Transverse colon (tissue), 4 donors: ENCODE measurements at regions of chr18 and their contacts with region 1.

Region 1: DNA sequence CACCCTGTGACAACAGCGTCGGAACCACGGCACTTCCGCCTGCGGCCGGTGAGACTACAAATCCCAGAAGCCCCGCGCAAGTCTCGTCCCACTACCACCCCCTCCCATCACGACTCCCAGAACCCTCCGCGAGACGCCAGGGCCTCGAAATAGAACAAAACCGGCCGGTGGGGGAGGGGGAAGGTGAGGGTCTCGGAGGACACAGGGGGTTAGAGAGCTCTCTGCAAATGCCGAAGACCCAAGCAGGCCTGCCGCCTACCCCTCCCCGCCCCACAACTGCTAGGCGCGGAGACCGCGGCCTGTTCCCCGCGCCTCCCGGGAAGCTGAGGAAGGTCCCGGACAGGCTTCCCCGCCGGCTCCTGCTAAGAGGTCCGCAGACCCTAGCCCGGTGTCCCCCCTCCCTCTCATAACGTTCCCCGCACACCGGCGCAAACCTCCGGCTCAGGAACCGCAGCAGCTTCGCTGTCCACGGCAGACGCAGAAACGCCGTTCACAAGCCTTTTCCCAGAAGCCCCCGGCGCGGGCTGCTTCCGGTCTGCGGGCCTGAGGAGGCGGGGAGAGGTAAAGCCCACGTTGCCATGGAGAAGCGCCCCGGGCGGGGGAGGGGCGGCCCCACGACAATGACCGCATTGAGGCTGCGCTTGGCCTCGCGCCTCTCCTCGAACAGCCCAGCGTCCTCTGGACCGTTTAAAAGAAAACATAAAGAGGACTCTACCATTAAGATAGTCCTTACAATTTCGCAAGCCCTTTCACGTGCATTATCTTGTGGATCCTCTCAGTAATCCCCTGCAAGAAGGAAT is at the start of gene ZNF24:
- DNase-seq: peak; percentile 97
- H3K4me3 ChIP-seq: peak within 1 kb of the TSS; percentile 76 to 94 (median 85)
- H3K27ac ChIP-seq: peak within 1 kb of the TSS; percentile 96 to 99 (median 98)
- H3K4me1 ChIP-seq: peaks cover 3 to 44% (median 21%) of the 10 kb centered on the region in 4 donors
- H3K27me3 ChIP-seq: no peaks in the 10 kb centered on the region
- CTCF ChIP-seq: no peak
- EP300 ChIP-seq: peak; percentile 27
- POLR2A ChIP-seq: peak; percentile 83
- total RNA-seq, gene ZNF24: 12.7 to 34.5 (median 29.1) TPM

Region 2: DNA sequence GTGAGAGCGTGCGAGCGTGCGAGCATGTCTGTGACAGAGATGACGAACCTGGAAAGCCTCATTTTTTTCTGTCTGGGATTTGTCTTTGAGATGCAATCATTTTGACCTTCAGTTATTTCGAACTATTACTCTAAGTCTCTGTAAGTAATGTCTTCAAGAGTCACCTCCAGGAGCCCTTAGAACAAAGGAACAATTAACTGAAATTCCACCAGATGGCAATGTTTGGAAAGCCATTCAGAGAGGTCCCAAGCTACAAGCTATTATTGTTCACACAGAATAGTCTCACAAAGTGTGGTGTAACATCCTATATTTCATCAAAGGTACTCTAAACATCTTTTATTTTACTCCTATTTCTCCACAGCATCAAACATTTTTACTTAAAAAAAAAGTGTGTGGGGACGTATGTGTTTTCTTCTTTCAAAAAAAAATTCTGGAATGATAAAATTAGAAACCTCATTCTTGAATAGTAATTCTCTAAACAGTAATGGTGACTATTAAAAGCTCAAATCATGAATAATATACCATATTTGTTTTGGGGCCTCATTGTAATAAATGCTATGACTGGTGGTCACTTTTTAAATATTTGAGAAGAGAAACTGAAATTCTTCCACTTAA is 338.1 kb before region 1 on chr18:
- in situ Hi-C with region 1: loop called in 1 of 4 experiments (anchors 25 kb)
- intact Hi-C with region 1: no loop called
- DNase-seq: no peak
- H3K4me3 ChIP-seq: no peak overlapping the region
- H3K27ac ChIP-seq: no peak overlapping the region
- H3K4me1 ChIP-seq: no peaks in the 10 kb centered on the region
- H3K27me3 ChIP-seq: no peaks in the 10 kb centered on the region
- CTCF ChIP-seq: peak; percentile 54 to 69 (median 60)
- EP300 ChIP-seq: no peak
- POLR2A ChIP-seq: no peak

Region 3: GRCh38 chr18:35240664-35241447 is 103.3 kb before region 1 on chr18 and contains the start of gene ZNF397:
- in situ Hi-C with region 1: loop called in 2 of 4 experiments (anchors 5 to 25 kb)
- intact Hi-C with region 1: no loop called
- DNase-seq: peak; percentile 99
- H3K4me3 ChIP-seq: peak within 1 kb of the TSS; percentile 60 to 80 (median 71)
- H3K27ac ChIP-seq: peak within 1 kb of the TSS; percentile 93 to 96 (median 95)
- H3K4me1 ChIP-seq: peaks cover 3 to 17% (median 11%) of the 10 kb centered on the region in 4 donors
- H3K27me3 ChIP-seq: no peaks in the 10 kb centered on the region
- CTCF ChIP-seq: no peak
- EP300 ChIP-seq: no peak
- POLR2A ChIP-seq: peak; percentile 94
- total RNA-seq, gene ZNF397: 21.8 to 60.6 (median 32.0) TPM

Region 4: DNA sequence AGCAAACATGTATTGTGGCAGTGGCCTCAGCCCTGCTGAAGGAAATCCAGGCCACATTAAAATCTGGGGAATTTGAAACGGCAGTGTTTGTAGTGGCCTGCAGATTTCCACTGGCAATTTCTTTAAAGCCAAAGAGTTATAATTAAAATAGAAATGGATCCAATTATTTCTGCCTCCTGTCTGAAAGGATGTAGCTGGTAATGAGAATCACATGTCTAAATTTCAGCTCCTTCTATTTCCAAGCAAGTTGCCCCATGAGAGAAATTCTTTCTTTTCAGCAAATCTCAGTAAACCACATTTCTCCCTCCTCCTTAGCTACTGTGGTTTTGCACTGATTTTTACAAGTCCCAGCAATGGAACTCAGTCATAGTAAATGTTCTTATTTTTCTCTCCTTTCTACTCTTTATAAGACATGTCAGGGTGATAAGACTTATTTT is 88.4 kb after region 1 on chr18:
- in situ Hi-C with region 1: no loop called
- intact Hi-C with region 1: no loop called
- DNase-seq: no peak
- H3K4me3 ChIP-seq: no peak overlapping the region
- H3K27ac ChIP-seq: no peak overlapping the region
- H3K4me1 ChIP-seq: peaks cover 0 to 2% (median 0%) of the 10 kb centered on the region in 4 donors
- H3K27me3 ChIP-seq: no peaks in the 10 kb centered on the region
- CTCF ChIP-seq: no peak
- EP300 ChIP-seq: no peak
- POLR2A ChIP-seq: no peak

Region 5: GRCh38 chr18:37253394-37254235 is 1909.5 kb after region 1 on chr18:
- in situ Hi-C with region 1: no loop called
- intact Hi-C with region 1: no loop called
- DNase-seq: no peak
- H3K4me3 ChIP-seq: peak overlapping the region in 3 of 4 donors; percentile 23 to 51 (median 35)
- H3K27ac ChIP-seq: no peak overlapping the region
- H3K4me1 ChIP-seq: peaks cover 0 to 12% (median 10%) of the 10 kb centered on the region in 4 donors
- H3K27me3 ChIP-seq: peaks cover 78% of the 10 kb centered on the region
- CTCF ChIP-seq: no peak
- EP300 ChIP-seq: no peak
- POLR2A ChIP-seq: no peak